Activated T-helper 1 cell treated with anti-CD3 and anti-CD28 coated beads, Interleukin-12 subunit alpha, Interleukin-12 subunit beta, Interleukin-2, Interleukin-4 antibody, amounts not matched to agents 30 ng/mL and 10 ng/mL and 1 ng/mL, durations not matched to agents 14 hours and 24 hours and 36 hours (primary cell): ENCODE measurements at regions of chr2 and their contacts with region 1.

Region 1: GRCh38 chr2:120312861-120313694 is 32.9 kb upstream of the INHBB start:
- DNase-seq: peak; percentile 64
- H3K4me3 Mint-ChIP-seq: peak overlapping the region; percentile 77
- H3K27ac Mint-ChIP-seq: peak overlapping the region; percentile 4
- H3K4me1 Mint-ChIP-seq: peaks cover 42% of the 10 kb centered on the region
- H3K27me3 Mint-ChIP-seq: peaks cover under 1% of the 10 kb centered on the region

Region 2: DNA sequence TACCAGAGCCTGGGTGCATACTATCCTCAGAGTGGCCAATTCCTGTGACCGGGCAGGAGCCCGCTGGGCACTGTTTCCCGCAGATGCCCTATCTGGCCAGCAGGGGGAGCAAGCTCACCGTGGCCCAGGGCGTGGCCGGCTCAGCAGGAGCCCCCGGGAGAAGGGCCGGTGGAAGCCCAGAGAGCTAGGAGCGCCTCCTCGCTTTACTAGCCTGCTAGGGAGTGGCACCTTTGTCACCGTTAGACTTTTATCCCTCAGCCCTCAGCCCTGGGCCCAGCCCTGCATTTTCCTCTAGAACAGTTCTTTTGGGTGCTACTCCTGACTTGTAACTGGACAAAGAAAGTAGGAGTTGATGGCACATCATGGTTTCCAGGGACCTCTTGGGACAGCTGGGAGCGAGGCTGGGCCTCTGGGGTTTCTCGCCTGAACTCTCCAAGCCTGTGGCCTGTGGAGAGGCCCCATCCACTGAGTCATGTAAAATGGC is 610.1 kb before region 1 on chr2:
- intact Hi-C with region 1: loop called (anchors 2 kb)
- DNase-seq: peak; percentile 56
- H3K4me3 Mint-ChIP-seq: no peak overlapping the region
- H3K27ac Mint-ChIP-seq: no peak overlapping the region
- H3K4me1 Mint-ChIP-seq: peaks cover 3% of the 10 kb centered on the region
- H3K27me3 Mint-ChIP-seq: peaks cover 2% of the 10 kb centered on the region

Region 3: GRCh38 chr2:120206022-120206581 is 107.0 kb before region 1 on chr2:
- intact Hi-C with region 1: loop called (anchors 1 kb)
- DNase-seq: no peak
- H3K4me3 Mint-ChIP-seq: no peak overlapping the region
- H3K27ac Mint-ChIP-seq: no peak overlapping the region
- H3K4me1 Mint-ChIP-seq: peaks cover 8% of the 10 kb centered on the region
- H3K27me3 Mint-ChIP-seq: peaks cover 2% of the 10 kb centered on the region

Region 4: GRCh38 chr2:120231974-120232635 is 81.0 kb before region 1 on chr2:
- intact Hi-C with region 1: loop called (anchors 1 kb)
- DNase-seq: peak; percentile 81
- H3K4me3 Mint-ChIP-seq: peak overlapping the region; percentile 91
- H3K27ac Mint-ChIP-seq: peak overlapping the region; percentile 98
- H3K4me1 Mint-ChIP-seq: peaks cover 59% of the 10 kb centered on the region
- H3K27me3 Mint-ChIP-seq: no peaks in the 10 kb centered on the region

Region 5: DNA sequence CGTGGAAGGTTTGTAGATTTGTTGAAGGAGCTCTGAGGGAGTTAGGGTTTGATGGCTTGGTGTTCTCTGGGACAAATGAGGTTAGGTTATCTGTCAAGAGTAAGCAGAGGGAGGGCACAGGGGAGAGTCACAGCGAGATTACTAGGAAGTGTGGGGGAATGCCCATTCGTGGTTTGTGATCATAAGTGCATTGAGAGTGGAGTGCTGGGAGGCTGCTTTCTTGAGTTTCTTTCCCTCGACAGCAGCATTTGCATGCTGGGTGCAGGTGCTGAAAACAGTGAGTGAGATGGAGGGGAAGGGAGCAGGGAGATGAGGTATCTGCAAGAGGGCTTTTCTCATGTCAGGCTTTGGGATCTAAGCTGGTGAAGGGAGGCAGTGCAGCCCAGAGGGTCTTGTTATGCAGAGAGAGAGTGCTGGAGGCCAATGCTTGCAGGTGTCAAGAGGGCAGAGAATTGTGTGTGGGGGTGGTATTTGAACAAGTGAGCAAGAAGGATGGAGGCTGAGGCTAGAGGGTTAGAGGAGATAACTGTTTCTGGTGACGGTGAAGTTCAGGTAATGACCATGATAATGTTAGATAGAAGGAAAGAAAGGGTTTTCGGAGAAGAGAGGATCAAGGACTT is 51.6 kb before region 1 on chr2:
- intact Hi-C with region 1: loop called (anchors 2 kb)
- DNase-seq: peak; percentile 56
- H3K4me3 Mint-ChIP-seq: no peak overlapping the region
- H3K27ac Mint-ChIP-seq: no peak overlapping the region
- H3K4me1 Mint-ChIP-seq: peaks cover 38% of the 10 kb centered on the region
- H3K27me3 Mint-ChIP-seq: no peaks in the 10 kb centered on the region

Region 6: DNA sequence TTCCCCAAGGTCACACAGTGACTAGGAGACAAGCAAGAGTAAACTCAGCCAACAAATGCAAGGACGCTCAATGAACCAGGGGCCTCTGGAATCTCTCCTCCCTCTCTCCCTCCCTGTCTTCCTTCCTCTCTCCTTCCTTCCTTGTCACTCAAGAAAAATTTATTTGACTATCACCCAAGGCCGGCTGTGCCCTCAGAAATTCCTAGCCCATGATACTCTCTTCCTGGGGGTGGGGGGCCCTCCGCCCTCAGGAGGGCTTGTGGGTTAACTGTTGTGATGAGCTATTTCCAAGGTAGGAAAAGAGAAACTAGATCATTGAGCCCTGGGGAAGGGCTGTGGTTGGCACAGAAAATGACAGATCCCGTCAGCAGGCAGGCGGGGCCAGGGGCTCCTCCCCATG is 54.6 kb after region 1 on chr2:
- intact Hi-C with region 1: no loop called
- DNase-seq: no peak
- H3K4me3 Mint-ChIP-seq: no peak overlapping the region
- H3K27ac Mint-ChIP-seq: no peak overlapping the region
- H3K4me1 Mint-ChIP-seq: no peaks in the 10 kb centered on the region
- H3K27me3 Mint-ChIP-seq: peaks cover 9% of the 10 kb centered on the region

Region 7: GRCh38 chr2:120384486-120385354 is 71.6 kb after region 1 on chr2:
- intact Hi-C with region 1: no loop called
- DNase-seq: no peak
- H3K4me3 Mint-ChIP-seq: no peak overlapping the region
- H3K27ac Mint-ChIP-seq: no peak overlapping the region
- H3K4me1 Mint-ChIP-seq: no peaks in the 10 kb centered on the region
- H3K27me3 Mint-ChIP-seq: no peaks in the 10 kb centered on the region